ENCODE measurements at regions of chr16 and their contacts with region 1.

Region 1: GRCh38 chr16:74309789-74310781 is 13.5 kb downstream of the PSMD7 start:
- DNase-seq: peak in 2 of 5 donors; percentile 10 to 24
- H3K4me3 ChIP-seq: no peak overlapping the region
- H3K4me3 Mint-ChIP-seq: no peak overlapping the region
- H3K27ac ChIP-seq: no peak overlapping the region
- H3K27ac Mint-ChIP-seq: peak overlapping the region in 1 of 8 donors; percentile 38
- H3K4me1 ChIP-seq: no peaks in the 10 kb centered on the region
- H3K4me1 Mint-ChIP-seq: no peaks in the 10 kb centered on the region
- H3K27me3 ChIP-seq: no peaks in the 10 kb centered on the region
- H3K27me3 Mint-ChIP-seq: no peaks in the 10 kb centered on the region

Region 2: DNA sequence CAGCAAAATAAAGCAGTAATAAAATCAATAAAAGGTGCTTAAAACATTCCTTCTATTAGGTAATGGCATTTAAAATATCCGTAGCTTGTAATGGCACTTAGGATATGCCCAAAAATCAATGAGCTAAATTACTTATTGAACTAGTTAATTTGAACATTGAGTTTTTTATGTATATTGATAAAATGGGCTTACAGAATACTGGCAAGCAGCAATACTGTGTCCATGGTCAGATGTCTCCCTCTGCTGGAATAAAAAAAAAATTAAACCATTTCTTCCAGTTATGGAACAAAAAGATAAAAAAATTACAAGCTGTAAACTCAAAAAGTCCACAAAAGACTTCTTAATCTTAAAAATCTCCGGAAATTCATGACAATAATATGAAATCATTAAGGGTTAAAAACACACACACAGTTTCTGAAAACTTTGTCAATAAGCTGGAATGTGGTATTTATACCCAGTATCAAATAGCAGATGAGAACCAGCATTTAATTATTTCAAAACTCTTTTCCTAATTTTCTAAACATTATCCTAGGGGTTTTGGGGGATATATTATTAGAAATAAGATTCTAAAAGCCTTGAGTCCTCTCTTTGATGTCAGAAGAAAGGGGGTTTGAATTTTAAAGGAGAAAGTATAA is 35.0 kb before region 1 on chr16:
- CTCF ChIA-PET with region 1: no interaction called
- POLR2A ChIA-PET with region 1: no interaction called
- DNase-seq: no peak
- H3K4me3 ChIP-seq: no peak overlapping the region
- H3K4me3 Mint-ChIP-seq: no peak overlapping the region
- H3K27ac ChIP-seq: no peak overlapping the region
- H3K27ac Mint-ChIP-seq: no peak overlapping the region
- H3K4me1 ChIP-seq: no peaks in the 10 kb centered on the region
- H3K4me1 Mint-ChIP-seq: no peaks in the 10 kb centered on the region
- H3K27me3 ChIP-seq: peaks cover 3% of the 10 kb centered on the region
- H3K27me3 Mint-ChIP-seq: peaks cover 15 to 50% of the 10 kb centered on the region in 2 donors

Region 3: DNA sequence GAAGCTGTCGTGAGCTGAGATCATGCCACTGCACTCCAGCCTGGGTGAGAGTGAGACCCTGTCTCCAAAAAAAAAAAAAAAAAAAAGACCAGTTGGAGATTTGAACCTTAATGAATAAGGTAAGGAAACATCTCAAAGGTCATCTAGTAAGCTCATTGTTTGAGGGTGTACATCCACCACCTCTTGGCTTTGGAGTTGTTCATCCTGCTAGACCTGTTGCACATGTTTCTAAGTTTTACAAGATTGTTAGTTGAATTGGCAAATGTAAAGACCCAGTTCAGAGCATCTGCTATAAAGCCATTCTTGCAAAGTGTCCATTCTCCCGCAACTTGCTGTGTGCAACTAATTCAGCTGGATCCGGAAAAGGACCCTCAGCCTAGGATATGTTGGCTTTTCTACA is 12.0 kb before region 1 on chr16:
- CTCF ChIA-PET with region 1: interaction called, 14 read pairs
- POLR2A ChIA-PET with region 1: no interaction called
- DNase-seq: no peak
- H3K4me3 ChIP-seq: no peak overlapping the region
- H3K4me3 Mint-ChIP-seq: peak overlapping the region; percentile 88 to 99 (median 93)
- H3K27ac ChIP-seq: no peak overlapping the region
- H3K27ac Mint-ChIP-seq: peak overlapping the region in 6 of 8 donors; percentile 63 to 99 (median 92)
- H3K4me1 ChIP-seq: peaks cover 33% of the 10 kb centered on the region
- H3K4me1 Mint-ChIP-seq: peaks cover 27 to 54% (median 43%) of the 10 kb centered on the region in 3 donors
- H3K27me3 ChIP-seq: no peaks in the 10 kb centered on the region
- H3K27me3 Mint-ChIP-seq: no peaks in the 10 kb centered on the region